ENCODE measurements at regions of chr3 and their contacts with region 1.

Region 1: DNA sequence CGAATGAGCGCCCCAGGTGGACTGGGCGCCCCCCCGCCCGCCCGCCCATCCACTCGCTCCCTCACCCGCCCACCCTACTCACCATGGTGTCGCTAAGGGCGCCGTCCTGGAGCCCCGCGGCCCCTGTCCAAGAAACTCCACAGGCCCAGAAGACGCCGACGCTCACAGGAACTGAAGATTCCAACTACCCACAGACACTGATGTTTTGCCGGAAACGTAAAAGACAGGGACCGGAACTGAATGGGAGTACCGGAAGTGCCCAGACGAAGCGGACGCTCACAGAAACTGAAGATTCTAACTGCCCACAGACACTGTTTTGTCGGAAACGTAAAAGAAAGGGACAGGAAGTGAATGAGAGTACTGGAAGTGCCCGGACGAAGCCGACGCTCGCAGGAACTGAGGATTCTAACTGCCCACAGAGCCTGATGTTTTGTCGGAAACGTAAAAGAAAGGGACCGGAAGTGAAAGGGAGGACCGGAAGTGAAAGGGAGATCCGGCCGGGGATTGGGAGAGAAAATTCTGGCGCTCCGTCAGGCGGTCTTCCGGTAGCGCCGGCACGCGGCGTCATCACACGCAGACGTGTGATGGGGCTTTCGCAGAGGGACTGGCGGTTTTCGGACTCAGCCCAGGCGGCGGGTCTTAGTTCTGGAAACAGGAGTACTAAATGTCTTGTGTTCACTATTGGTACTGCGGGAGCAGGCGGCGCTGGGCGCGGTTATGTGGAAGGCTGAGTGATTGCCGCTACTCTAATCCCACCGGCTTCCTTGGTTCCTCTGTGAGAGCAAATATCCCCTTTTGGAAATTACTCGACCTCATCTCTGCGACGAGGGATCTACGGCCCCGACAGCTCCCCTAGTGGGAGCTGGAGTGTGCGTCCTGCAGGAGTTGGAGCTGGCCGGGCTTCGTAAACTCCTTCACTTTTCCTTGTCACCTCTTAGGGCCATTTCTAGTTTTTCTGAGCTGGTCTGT is at the start of gene ISY1:
- DNase-seq: peak; percentile 90 to 93 (median 92)
- H3K4me3 ChIP-seq: peak within 1 kb of the TSS; percentile 75 to 94
- H3K4me3 Mint-ChIP-seq: peak within 1 kb of the TSS; percentile 96 to 100 (median 97)
- H3K27ac ChIP-seq: peak within 1 kb of the TSS; percentile 97
- H3K27ac Mint-ChIP-seq: peak within 1 kb of the TSS; percentile 98 to 100 (median 99)
- H3K4me1 ChIP-seq: peaks cover 23% of the 10 kb centered on the region
- H3K4me1 Mint-ChIP-seq: peaks cover 24 to 59% (median 37%) of the 10 kb centered on the region in 4 donors
- H3K27me3 ChIP-seq: no peaks in the 10 kb centered on the region
- H3K27me3 Mint-ChIP-seq: no peaks in the 10 kb centered on the region
- total RNA-seq, gene ISY1: 29.5 to 34.3 TPM

Region 2: DNA sequence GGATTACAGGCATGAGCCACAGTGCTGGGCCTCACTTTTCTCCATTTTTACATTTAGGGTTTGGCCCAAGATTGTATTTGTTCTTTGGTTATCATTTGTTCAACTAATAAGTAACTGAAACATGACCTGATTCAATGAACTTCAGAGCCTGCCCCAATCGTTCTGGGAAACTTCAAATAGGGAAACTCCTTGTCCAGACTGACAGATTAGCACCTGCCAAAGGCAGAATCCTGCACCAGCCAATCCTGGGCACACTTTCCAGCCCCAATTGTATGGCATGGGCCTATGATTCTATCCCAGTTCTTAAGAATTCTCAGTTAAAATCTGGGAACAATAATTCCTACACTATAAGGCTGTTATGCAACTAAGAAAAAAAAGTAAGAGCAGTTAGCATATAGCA is 21.3 kb before region 1 on chr3:
- CTCF ChIA-PET with region 1: no interaction called
- POLR2A ChIA-PET with region 1: no interaction called
- intact Hi-C with region 1: no loop called
- DNase-seq: no peak
- H3K4me3 ChIP-seq: no peak overlapping the region
- H3K4me3 Mint-ChIP-seq: no peak overlapping the region
- H3K27ac ChIP-seq: no peak overlapping the region
- H3K27ac Mint-ChIP-seq: no peak overlapping the region
- H3K4me1 ChIP-seq: no peaks in the 10 kb centered on the region
- H3K4me1 Mint-ChIP-seq: no peaks in the 10 kb centered on the region
- H3K27me3 ChIP-seq: no peaks in the 10 kb centered on the region
- H3K27me3 Mint-ChIP-seq: no peaks in the 10 kb centered on the region

Region 3: DNA sequence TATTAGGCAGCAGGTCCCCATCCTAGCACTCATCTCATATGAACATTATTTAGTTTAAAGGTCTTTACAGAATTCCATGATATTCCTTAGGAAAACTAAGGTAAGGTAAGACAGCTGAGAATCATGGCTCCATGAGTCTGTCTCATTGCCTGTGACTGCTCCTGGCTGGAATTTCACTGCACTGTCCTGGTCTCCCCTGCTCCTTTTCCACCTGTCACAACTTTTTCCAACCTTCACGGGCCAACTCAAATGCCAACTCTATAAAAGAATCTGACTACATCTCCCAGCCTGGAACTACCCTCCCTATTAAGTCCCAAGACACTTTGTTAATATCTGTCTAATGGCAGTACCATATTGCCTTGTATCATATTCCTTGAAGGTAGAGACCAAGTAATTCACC is 14.9 kb after region 1 on chr3:
- CTCF ChIA-PET with region 1: interaction called, 7 read pairs
- POLR2A ChIA-PET with region 1: interaction called, 16 read pairs
- intact Hi-C with region 1: no loop called
- DNase-seq: no peak
- H3K4me3 ChIP-seq: no peak overlapping the region
- H3K4me3 Mint-ChIP-seq: peak overlapping the region in 7 of 8 donors; percentile 33 to 82 (median 63)
- H3K27ac ChIP-seq: peak overlapping the region; percentile 44
- H3K27ac Mint-ChIP-seq: peak overlapping the region; percentile 57 to 91 (median 81)
- H3K4me1 ChIP-seq: peaks cover 92% of the 10 kb centered on the region
- H3K4me1 Mint-ChIP-seq: peaks cover 50 to 94% (median 75%) of the 10 kb centered on the region in 4 donors
- H3K27me3 ChIP-seq: no peaks in the 10 kb centered on the region
- H3K27me3 Mint-ChIP-seq: no peaks in the 10 kb centered on the region

Region 4: GRCh38 chr3:129183569-129184395 is 22.6 kb after region 1 on chr3 and contains the start of gene CNBP:
- CTCF ChIA-PET with region 1: interaction called, 9 read pairs
- POLR2A ChIA-PET with region 1: interaction called, 16 read pairs
- intact Hi-C with region 1: loop called (anchors 1 kb)
- DNase-seq: peak; percentile 90 to 95 (median 93)
- H3K4me3 ChIP-seq: peak within 1 kb of the TSS; percentile 51 to 93
- H3K4me3 Mint-ChIP-seq: peak within 1 kb of the TSS; percentile 89 to 99 (median 97)
- H3K27ac ChIP-seq: peak within 1 kb of the TSS; percentile 99
- H3K27ac Mint-ChIP-seq: peak within 1 kb of the TSS; percentile 91 to 99 (median 98)
- H3K4me1 ChIP-seq: peaks cover 41% of the 10 kb centered on the region
- H3K4me1 Mint-ChIP-seq: peaks cover 20 to 55% (median 31%) of the 10 kb centered on the region in 4 donors
- H3K27me3 ChIP-seq: no peaks in the 10 kb centered on the region
- H3K27me3 Mint-ChIP-seq: no peaks in the 10 kb centered on the region
- total RNA-seq, gene CNBP: 369 to 400 TPM

Region 5: GRCh38 chr3:129278439-129278970 is 117.3 kb after region 1 on chr3 and contains the start of gene HMCES:
- CTCF ChIA-PET with region 1: no interaction called
- POLR2A ChIA-PET with region 1: interaction called, 7 read pairs
- intact Hi-C with region 1: loop called (anchors 1 kb)
- DNase-seq: peak; percentile 93 to 97 (median 95)
- H3K4me3 ChIP-seq: peak within 1 kb of the TSS; percentile 69 to 85
- H3K4me3 Mint-ChIP-seq: peak within 1 kb of the TSS; percentile 94 to 99 (median 98)
- H3K27ac ChIP-seq: peak within 1 kb of the TSS; percentile 99
- H3K27ac Mint-ChIP-seq: peak within 1 kb of the TSS; percentile 90 to 100 (median 99)
- H3K4me1 ChIP-seq: peaks cover 44% of the 10 kb centered on the region
- H3K4me1 Mint-ChIP-seq: peaks cover 22 to 50% (median 38%) of the 10 kb centered on the region in 4 donors
- H3K27me3 ChIP-seq: no peaks in the 10 kb centered on the region
- H3K27me3 Mint-ChIP-seq: no peaks in the 10 kb centered on the region
- total RNA-seq, gene HMCES: 50.1 to 52.5 TPM